ENCODE measurements at regions of chr19 and their contacts with region 1.

Region 1: GRCh38 chr19:2253106-2254053 is 2.8 kb downstream of the JSRP1 start:
- DNase-seq: peak; percentile 72
- ATAC-seq: peak; percentile 38
- H3K4me3 Mint-ChIP-seq: peak overlapping the region; percentile 69
- H3K27ac Mint-ChIP-seq: no peak overlapping the region
- H3K4me1 Mint-ChIP-seq: peaks cover 3% of the 10 kb centered on the region; the same call in 1 of the 2 replicates
- H3K27me3 Mint-ChIP-seq: peaks cover 35% of the 10 kb centered on the region
- CTCF ChIP-seq: peak; percentile 50; the same call in 1 of the 2 replicates

Region 2: DNA sequence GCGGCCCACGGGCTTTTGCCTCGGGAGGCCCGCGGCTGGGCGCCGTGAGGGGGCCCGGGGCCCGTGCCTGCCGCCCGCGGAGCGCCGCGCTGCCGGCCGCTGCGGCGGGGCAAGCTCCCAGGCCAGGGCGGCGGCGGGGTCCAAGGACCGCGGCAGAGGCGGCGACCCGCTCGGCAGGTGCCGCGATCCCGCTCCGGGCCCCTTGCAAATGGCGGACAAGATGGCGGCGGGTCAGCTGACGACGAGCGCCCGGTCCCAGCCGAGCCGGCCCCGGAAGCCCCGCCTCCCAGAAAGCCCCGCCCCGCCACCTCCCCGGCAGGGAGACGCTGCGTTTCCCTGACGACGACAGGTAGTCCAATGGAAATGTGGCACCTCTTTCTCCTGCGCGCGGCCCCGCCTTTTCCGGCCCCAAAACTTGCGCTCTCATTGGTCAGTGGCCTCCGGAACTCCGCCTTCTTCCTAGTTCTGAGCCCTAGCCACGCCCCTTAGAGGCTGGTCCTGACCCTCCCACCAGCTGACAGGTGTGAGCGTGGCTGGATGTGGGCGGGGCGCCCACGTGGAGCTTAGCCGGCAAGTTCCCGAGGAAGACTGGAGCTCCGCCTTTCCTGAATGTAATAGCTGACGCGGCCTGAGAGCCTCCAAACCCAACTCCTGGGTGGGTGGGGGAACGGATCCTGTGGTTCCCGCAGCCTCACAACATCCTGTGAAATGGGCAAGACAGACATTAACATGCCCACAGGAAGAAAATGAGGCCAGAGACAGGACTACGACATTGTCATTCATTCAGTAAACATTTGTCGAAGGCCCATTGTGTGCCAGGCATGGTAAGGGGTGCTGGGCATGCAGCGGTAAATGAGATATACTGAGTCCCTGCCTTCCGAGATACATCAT is 101.8 kb before region 1 on chr19 and contains the start of gene AP3D1:
- CTCF ChIA-PET with region 1: interaction called, 23 read pairs
- POLR2A ChIA-PET with region 1: no interaction called
- DNase-seq: peak; percentile 100
- ATAC-seq: peak; percentile 93
- H3K4me3 Mint-ChIP-seq: peak within 1 kb of the TSS; percentile 85
- H3K27ac Mint-ChIP-seq: peak within 1 kb of the TSS; percentile 97
- H3K4me1 Mint-ChIP-seq: peaks cover 28% of the 10 kb centered on the region
- H3K27me3 Mint-ChIP-seq: no peaks in the 10 kb centered on the region
- CTCF ChIP-seq: no peak
- total RNA-seq, gene AP3D1: 160 to 190 TPM (median 163 TPM) in 3 replicates

Region 3: DNA sequence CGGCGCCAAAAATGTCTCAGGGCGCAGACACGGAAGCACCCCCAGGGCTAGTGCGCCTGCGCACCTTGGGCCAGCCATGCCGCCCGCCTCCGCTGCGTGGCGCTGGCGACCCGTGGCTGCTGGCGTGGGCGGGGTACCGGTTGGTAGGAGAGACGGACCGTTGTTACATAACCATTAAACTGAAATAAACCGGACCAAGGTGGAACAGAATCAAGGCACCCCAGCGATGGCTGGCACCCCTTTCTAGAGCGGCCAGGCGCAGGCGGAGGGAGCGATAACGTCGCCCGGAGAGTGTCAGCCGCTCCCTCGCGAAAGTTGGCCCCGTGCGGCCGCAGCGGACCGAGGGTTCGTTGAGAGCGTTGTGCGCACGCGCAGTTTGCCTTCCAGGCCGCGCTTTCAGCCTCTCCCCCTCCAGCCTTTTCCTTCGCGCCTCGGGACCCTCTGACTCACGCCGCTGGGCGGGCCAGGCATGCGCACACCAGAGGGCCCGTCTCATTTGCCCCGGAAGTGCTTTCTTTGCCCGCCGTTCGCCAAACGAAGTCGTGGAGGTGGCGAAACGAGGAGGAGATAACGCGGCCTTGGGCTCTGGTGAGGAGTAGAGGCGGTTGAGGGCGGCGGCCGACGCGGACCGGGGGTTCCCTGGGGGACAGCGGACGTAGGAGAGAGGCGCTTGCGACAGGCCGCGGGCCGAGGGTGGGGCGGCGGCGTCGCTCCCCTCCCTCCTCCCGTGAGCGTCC is 16.9 kb before region 1 on chr19 and contains the starts of genes PLEKHJ1 and SF3A2:
- CTCF ChIA-PET with region 1: interaction called, 65 read pairs
- POLR2A ChIA-PET with region 1: interaction called, 4 read pairs
- DNase-seq: peak; percentile 97
- ATAC-seq: peak; percentile 83
- H3K4me3 Mint-ChIP-seq: peak within 1 kb of the TSS; percentile 93
- H3K27ac Mint-ChIP-seq: peak within 1 kb of the TSS; percentile 99
- H3K4me1 Mint-ChIP-seq: peaks cover 42% of the 10 kb centered on the region
- H3K27me3 Mint-ChIP-seq: peaks cover 5% of the 10 kb centered on the region; the same call in 1 of the 2 replicates
- CTCF ChIP-seq: peak; percentile 83
- total RNA-seq, gene PLEKHJ1: 164 to 189 TPM (median 167 TPM) in 3 replicates
- total RNA-seq, gene SF3A2: 167 to 184 TPM (median 169 TPM) in 3 replicates

Region 4: GRCh38 chr19:2269244-2269947 is 16.0 kb after region 1 on chr19:
- CTCF ChIA-PET with region 1: interaction called, 13 read pairs
- POLR2A ChIA-PET with region 1: interaction called, 3 read pairs
- DNase-seq: peak; percentile 99
- ATAC-seq: peak; percentile 79
- H3K4me3 Mint-ChIP-seq: peak overlapping the region; percentile 82
- H3K27ac Mint-ChIP-seq: peak overlapping the region; percentile 76; the same call in 1 of the 2 replicates
- H3K4me1 Mint-ChIP-seq: peaks cover 33% of the 10 kb centered on the region
- H3K27me3 Mint-ChIP-seq: no peaks in the 10 kb centered on the region; the same call in 1 of the 2 replicates
- CTCF ChIP-seq: no peak

Region 5: GRCh38 chr19:2274931-2275535 is 21.7 kb after region 1 on chr19:
- CTCF ChIA-PET with region 1: interaction called, 23 read pairs
- POLR2A ChIA-PET with region 1: interaction called, 3 read pairs
- DNase-seq: peak; percentile 84
- ATAC-seq: peak; percentile 52
- H3K4me3 Mint-ChIP-seq: no peak overlapping the region
- H3K27ac Mint-ChIP-seq: no peak overlapping the region
- H3K4me1 Mint-ChIP-seq: peaks cover 22% of the 10 kb centered on the region
- H3K27me3 Mint-ChIP-seq: no peaks in the 10 kb centered on the region; the same call in 1 of the 2 replicates
- CTCF ChIP-seq: peak; percentile 60; the same call in 1 of the 2 replicates

Region 6: DNA sequence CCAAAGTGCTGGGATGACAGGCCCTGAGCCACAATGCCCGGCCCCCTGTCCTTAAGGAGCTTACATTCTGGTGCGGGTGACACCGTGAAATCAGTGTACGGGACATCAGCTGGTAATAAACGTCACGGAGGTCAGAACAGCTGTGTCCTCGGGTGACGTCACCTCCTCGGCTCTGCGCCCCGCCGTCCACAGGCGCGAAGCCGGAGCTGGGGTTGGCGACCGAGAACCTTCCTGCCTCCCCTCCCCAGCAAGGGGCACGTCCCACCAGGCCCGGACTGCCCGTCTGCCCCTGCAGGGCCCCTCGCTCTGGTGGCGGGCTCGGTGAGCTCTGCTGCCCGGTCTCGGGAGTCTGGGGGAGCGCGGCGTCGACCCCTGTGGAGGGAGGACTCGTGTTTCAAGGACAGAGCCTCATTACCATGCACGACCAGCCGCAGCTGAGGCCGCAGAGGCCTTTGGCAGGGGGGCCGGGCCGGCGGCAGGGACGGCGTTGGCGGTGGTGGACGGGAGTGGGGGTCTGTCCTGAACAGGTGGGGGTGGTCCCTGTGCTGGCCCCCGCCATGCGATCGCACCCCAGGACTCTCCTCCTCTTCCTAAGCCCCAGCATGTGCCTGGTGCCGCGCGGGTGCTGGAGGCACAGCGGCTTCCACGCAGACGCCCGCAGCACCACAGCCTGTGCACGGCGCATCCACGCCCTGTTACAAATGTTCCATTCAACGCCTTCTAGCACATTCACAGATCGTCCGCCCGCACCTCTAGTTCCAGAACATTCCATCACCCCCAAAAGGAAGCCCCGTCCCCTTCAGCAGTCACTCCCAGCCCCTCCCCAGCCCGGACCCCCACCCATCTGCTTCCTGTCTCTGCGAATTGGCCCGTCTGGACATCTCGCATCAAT is 49.2 kb after region 1 on chr19:
- CTCF ChIA-PET with region 1: interaction called, 11 read pairs
- POLR2A ChIA-PET with region 1: no interaction called
- DNase-seq: peak; percentile 72
- ATAC-seq: peak; percentile 75
- H3K4me3 Mint-ChIP-seq: peak overlapping the region; percentile 25; the same call in 1 of the 2 replicates
- H3K27ac Mint-ChIP-seq: no peak overlapping the region
- H3K4me1 Mint-ChIP-seq: peaks cover 5% of the 10 kb centered on the region
- H3K27me3 Mint-ChIP-seq: peaks cover 10% of the 10 kb centered on the region
- CTCF ChIP-seq: no peak

Region 7: DNA sequence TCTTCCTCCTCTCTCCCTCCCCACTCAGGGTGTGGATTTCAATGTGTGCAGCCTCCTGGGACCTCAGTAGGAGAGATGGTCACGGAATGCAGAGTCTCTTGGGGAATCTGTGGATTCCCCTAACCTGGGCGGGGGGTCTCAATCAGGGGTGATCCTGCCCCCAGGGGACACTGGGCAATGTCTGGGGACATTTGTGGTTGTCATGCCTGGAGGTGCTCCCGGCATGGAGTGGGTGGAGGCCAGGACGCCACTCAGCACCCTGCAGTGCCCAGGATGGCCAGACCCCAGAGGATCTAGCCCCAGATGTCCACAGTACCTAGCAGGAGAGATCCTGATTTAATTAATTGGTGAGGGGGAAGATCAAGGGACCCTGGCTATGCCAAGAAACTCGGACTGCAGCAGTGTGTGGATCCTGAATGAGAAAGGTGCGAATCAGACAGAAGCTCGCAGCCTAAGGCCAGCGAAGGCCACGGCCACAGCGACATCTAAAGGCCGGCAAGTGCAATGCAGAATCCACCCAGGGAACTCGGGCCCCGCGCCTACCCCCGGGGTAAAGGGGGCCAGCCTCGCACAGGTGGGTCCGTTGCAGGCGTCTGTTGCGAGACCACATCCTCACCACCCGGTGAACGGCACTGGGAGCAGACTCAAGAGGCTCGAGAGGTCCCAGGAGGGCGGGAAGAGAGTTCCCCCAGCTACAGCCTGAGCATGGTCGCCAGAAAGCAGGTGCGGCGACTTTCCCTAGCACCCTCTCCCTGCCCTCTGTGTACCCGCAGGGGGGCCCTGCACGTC is 360.3 kb after region 1 on chr19:
- CTCF ChIA-PET with region 1: no interaction called
- POLR2A ChIA-PET with region 1: no interaction called
- DNase-seq: peak; percentile 71
- ATAC-seq: peak; percentile 70
- H3K4me3 Mint-ChIP-seq: no peak overlapping the region
- H3K27ac Mint-ChIP-seq: no peak overlapping the region
- H3K4me1 Mint-ChIP-seq: peaks cover 11% of the 10 kb centered on the region
- H3K27me3 Mint-ChIP-seq: peaks cover 17% of the 10 kb centered on the region
- CTCF ChIP-seq: peak; percentile 83